Activated T-helper 1 cell treated with anti-CD3 and anti-CD28 coated beads, Interleukin-12 subunit alpha, Interleukin-12 subunit beta, Interleukin-2, Interleukin-4 antibody, amounts not matched to agents 30 ng/mL and 10 ng/mL and 1 ng/mL, durations not matched to agents 14 hours and 24 hours and 36 hours (primary cell): ENCODE measurements at regions of chr4 and their contacts with region 1.

Region 1: DNA sequence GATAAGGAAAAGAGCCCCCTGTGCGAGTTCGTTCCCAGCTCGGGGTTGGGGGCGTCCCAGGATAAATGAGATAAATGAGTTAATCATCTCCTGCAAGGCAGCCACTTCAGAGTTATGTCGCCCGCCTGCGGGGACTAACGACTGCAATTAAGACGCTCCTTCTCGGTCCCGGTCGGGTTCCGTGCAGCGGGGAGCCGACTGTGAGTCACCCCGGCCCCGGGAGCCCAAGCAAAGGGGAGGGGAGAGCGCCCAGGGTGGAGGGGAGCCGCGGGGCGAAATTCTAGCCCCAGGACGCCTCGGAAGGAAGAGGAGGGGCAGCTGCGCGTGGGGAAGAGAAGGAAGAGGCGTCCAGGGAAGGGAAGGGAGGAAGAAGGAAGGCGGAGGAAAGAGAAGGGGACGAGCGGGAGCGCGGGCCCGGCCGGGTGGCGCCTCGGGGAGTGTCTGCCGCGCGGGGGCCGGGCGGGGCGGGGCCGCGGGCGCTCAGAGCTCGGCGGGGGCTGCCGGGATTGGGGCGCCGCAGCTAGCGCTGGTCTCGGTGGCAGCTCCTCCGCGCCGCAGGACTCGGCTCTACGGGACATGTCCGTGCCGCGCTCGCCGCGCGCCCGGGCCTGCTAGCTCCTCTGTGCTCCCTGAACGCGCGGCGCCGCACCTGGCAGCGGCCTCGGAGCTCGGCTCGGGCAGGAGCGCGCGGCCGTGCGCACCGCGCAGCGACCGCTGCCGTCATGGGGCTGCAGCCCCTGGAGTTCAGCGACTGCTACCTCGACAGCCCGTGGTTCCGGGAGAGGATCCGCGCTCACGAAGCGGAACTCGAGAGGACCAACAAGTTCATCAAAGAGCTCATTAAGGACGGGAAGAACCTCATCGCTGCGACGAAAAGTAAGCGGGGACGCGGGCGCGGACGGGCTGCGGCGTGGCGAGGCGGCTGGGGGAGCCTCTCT is at the start of gene ARHGAP10:
- DNase-seq: peak; percentile 49
- H3K4me3 Mint-ChIP-seq: peak within 1 kb of the TSS; percentile 93
- H3K27ac Mint-ChIP-seq: peak within 1 kb of the TSS; percentile 84
- H3K4me1 Mint-ChIP-seq: peaks cover 45% of the 10 kb centered on the region
- H3K27me3 Mint-ChIP-seq: peaks cover 37% of the 10 kb centered on the region
- total RNA-seq, gene ARHGAP10: 7.4 and 8.6 TPM in 2 replicates

Region 2: DNA sequence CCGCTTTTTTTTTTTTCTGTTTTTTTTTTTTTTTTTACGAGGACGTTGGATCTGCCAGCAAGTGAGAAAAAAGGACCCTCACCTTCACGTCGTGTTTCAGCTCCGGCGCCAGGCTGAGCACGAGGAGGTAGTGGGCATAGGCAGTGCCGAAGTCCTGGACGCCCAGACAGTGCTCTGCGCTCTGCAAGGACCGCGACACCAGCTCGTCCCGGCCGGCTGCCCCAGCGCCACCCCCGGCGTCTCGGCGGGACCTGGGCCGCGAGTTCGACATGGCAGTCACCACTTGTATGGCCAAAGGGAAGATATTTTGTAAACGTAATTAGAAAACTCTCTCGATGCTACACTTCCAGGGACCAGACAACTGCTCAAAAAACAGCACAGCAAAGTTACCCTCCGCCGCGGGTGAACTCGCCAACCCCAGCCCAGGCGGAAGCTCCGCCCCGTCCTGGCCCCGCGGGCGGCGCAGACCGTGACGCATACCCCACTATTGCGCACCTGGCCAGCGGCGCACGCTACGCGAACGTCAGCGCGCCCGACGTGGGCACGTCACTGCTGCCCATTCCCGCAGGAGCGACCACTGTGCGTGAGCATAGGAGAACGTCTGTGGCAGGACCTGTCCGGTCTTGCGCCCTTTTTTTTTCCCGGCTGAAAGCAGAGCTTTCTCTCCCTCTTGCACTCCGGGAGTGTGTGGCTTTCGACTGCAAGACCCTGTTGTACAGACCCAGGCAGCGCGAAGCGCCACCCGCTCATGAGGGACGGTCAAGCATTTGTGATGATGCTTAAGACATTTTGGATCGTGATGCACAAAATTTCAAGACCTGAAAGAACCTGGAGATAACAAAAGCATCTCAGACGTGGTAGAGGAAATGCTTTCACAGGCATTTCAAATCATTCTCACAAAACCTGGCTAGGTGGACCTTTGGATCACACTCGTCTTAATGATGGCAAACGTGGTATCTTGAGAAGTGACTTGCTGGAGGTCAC is 47.8 kb before region 1 on chr4 and contains the start of gene PRMT9:
- intact Hi-C with region 1: loop called (anchors 1 kb)
- DNase-seq: peak; percentile 85
- H3K4me3 Mint-ChIP-seq: peak within 1 kb of the TSS; percentile 92
- H3K27ac Mint-ChIP-seq: peak within 1 kb of the TSS; percentile 92
- H3K4me1 Mint-ChIP-seq: peaks cover 30% of the 10 kb centered on the region
- H3K27me3 Mint-ChIP-seq: peaks cover 9% of the 10 kb centered on the region
- total RNA-seq, gene PRMT9: 6.8 and 7.4 TPM in 2 replicates

Region 3: GRCh38 chr4:147780137-147780777 is 48.4 kb after region 1 on chr4:
- intact Hi-C with region 1: loop called (anchors 5 kb)
- DNase-seq: no peak
- H3K4me3 Mint-ChIP-seq: no peak overlapping the region
- H3K27ac Mint-ChIP-seq: no peak overlapping the region
- H3K4me1 Mint-ChIP-seq: peaks cover 27% of the 10 kb centered on the region
- H3K27me3 Mint-ChIP-seq: no peaks in the 10 kb centered on the region

Region 4: DNA sequence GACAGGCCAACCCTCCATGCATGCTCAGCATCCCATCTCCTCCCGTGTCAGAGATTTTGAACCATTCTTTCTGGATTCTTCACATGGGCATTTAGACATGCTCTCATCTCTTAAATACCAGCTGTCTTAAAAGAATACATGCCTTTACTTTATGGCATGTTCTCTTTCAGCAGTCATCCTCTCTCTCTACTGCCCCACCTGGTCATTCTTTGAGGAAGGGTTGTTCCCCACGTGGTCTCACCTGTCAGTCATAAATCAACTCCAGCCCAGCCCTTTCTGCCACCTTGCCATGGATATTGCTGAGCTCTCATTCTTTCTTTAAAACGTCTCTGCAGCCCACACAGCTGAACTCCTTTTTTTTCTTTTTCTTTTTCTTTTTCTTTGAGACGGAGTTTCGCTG is 111.3 kb after region 1 on chr4:
- intact Hi-C with region 1: loop called (anchors 1 kb)
- DNase-seq: no peak
- H3K4me3 Mint-ChIP-seq: no peak overlapping the region
- H3K27ac Mint-ChIP-seq: no peak overlapping the region
- H3K4me1 Mint-ChIP-seq: no peaks in the 10 kb centered on the region
- H3K27me3 Mint-ChIP-seq: peaks cover 21% of the 10 kb centered on the region

Region 5: GRCh38 chr4:147943159-147943638 is 211.3 kb after region 1 on chr4:
- intact Hi-C with region 1: loop called (anchors 1 kb)
- DNase-seq: no peak
- H3K4me3 Mint-ChIP-seq: peak overlapping the region; percentile 17
- H3K27ac Mint-ChIP-seq: peak overlapping the region; percentile 36
- H3K4me1 Mint-ChIP-seq: peaks cover 37% of the 10 kb centered on the region
- H3K27me3 Mint-ChIP-seq: peaks cover 6% of the 10 kb centered on the region